Heart right ventricle (tissue), 16 donors: ENCODE measurements at regions of chr12 and their contacts with region 1.

Region 1: GRCh38 chr12:99767809-99768208 is 120.3 kb downstream of the GARIN6 start:
- DNase-seq: no peak
- ATAC-seq: no peak
- H3K4me3 ChIP-seq: peak overlapping the region in 4 of 10 donors; percentile 16 to 28 (median 24)
- H3K27ac ChIP-seq: no peak overlapping the region
- H3K4me1 ChIP-seq: peaks cover 0 to 12% (median 0%) of the 10 kb centered on the region in 9 donors
- H3K27me3 ChIP-seq: no peaks in the 10 kb centered on the region
- CTCF ChIP-seq: peak in 7 of 9 donors; percentile 20 to 65 (median 50)

Region 2: DNA sequence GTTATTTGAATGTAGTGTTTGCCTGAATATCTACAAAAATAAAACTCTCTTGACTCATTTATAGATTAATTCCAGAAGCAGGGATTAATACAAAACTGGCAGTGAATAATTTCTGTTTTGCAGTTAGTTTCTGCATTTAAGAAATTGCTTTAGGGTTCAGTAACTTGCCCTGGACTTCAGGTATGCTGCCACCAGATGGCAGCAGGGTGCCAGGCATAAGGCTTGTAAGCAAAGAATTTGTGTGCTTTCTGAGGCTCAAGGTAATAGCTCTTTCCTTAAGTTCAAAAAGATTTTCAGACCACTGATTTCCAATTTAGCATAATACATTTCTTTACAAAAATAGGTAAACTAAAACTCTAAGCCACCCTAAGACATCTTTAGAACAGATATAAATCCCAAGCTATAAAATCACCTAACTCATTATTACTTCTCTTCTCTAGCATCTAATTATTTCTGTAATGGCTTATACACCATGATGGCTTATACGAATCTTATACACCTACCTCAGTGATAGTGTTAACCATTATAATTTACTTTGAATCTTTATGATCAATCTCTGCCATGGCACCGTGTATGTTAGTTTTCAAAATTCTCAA is 724.4 kb before region 1 on chr12:
- intact Hi-C with region 1: loop called in 8 of 10 experiments (anchors 5 to 10 kb)
- DNase-seq: peak; percentile 36 to 57
- ATAC-seq: no peak
- H3K4me3 ChIP-seq: no peak overlapping the region
- H3K27ac ChIP-seq: no peak overlapping the region
- H3K4me1 ChIP-seq: no peaks in the 10 kb centered on the region
- H3K27me3 ChIP-seq: no peaks in the 10 kb centered on the region
- CTCF ChIP-seq: peak; percentile 56 to 93 (median 84)

Region 3: GRCh38 chr12:99049774-99050173 is 718.0 kb before region 1 on chr12:
- intact Hi-C with region 1: loop called in 8 of 10 experiments (anchors 5 to 10 kb)
- DNase-seq: no peak
- ATAC-seq: no peak
- H3K4me3 ChIP-seq: no peak overlapping the region
- H3K27ac ChIP-seq: no peak overlapping the region
- H3K4me1 ChIP-seq: no peaks in the 10 kb centered on the region
- H3K27me3 ChIP-seq: no peaks in the 10 kb centered on the region
- CTCF ChIP-seq: no peak

Region 4: DNA sequence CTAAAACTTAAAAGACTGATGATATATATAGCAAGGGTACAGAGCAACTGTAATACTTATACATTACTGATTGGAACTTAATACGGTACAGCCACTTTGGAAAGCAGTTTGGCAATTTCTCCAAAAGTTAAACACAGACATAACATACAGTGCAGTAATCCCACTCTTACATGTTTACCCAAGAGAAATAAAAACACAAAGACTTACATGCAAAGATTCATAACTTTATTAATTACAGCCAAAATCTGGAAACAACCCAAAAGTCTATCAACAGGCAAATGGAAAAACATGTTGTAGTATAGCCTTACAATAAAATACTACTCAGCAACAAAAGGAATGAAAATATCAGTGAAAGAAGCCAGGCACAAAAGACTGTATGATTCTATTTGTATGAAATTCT is 35.7 kb before region 1 on chr12:
- intact Hi-C with region 1: no loop called
- DNase-seq: no peak
- ATAC-seq: no peak
- H3K4me3 ChIP-seq: no peak overlapping the region
- H3K27ac ChIP-seq: no peak overlapping the region
- H3K4me1 ChIP-seq: no peaks in the 10 kb centered on the region
- H3K27me3 ChIP-seq: no peaks in the 10 kb centered on the region
- CTCF ChIP-seq: no peak

Region 5: GRCh38 chr12:99959547-99960180 is 191.9 kb after region 1 on chr12:
- intact Hi-C with region 1: loop called in 1 of 10 experiments (anchors 5 kb)
- DNase-seq: no peak
- ATAC-seq: peak in 1 of 8 donors; percentile 63
- H3K4me3 ChIP-seq: no peak overlapping the region
- H3K27ac ChIP-seq: peak overlapping the region in 1 of 10 donors; percentile 4
- H3K4me1 ChIP-seq: peaks cover 0 to 7% (median 0%) of the 10 kb centered on the region in 9 donors
- H3K27me3 ChIP-seq: no peaks in the 10 kb centered on the region
- CTCF ChIP-seq: no peak